ENCODE measurements at regions of chr12 and their contacts with region 1.

Region 1: DNA sequence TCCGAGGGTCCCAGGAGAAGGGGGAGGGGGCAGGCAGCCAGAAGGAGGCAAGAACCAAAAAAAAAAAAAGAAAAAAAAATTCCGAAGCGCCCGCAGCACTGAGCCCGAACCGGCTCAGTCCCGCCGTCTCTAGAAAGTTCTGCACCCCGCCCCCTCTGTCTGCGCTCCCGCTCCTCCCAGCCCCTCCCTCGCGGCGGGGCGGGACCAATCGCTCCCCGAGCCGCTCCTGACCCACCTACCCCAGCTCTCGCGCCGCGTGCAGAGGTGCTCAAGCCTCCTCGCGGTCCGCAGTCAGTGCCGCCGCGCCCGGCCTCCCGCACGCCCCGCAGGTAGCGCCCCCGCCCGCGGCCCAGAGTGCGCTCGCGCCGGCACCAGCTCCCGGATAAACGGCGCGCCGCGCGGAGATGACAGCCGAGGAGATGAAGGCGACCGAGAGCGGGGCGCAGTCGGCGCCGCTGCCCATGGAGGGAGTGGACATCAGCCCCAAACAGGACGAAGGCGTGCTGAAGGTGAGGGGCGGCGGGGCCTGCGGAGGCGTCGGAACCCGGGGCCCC is at the start of gene FKBP4:
- DNase-seq: peak; percentile 93
- ATAC-seq: peak; percentile 85
- H3K4me3 Mint-ChIP-seq: peak within 1 kb of the TSS; percentile 84
- H3K27ac Mint-ChIP-seq: no peak within 1 kb of the TSS
- H3K4me1 Mint-ChIP-seq: peaks cover 36% of the 10 kb centered on the region
- H3K27me3 Mint-ChIP-seq: no peaks in the 10 kb centered on the region
- CTCF ChIP-seq: no peak
- total RNA-seq, gene FKBP4: 245 to 257 TPM (median 249 TPM) in 3 replicates

Region 2: GRCh38 chr12:2752676-2753371 is 42.0 kb before region 1 on chr12:
- CTCF ChIA-PET with region 1: interaction called, 11 read pairs
- POLR2A ChIA-PET with region 1: interaction called, 5 read pairs
- DNase-seq: peak; percentile 93
- ATAC-seq: peak; percentile 87
- H3K4me3 Mint-ChIP-seq: peak overlapping the region; percentile 58; the same call in 1 of the 2 replicates
- H3K27ac Mint-ChIP-seq: no peak overlapping the region
- H3K4me1 Mint-ChIP-seq: peaks cover 62% of the 10 kb centered on the region
- H3K27me3 Mint-ChIP-seq: peaks cover 43% of the 10 kb centered on the region
- CTCF ChIP-seq: no peak